ENCODE measurements at regions of chr15 and their contacts with region 1.

Region 1: DNA sequence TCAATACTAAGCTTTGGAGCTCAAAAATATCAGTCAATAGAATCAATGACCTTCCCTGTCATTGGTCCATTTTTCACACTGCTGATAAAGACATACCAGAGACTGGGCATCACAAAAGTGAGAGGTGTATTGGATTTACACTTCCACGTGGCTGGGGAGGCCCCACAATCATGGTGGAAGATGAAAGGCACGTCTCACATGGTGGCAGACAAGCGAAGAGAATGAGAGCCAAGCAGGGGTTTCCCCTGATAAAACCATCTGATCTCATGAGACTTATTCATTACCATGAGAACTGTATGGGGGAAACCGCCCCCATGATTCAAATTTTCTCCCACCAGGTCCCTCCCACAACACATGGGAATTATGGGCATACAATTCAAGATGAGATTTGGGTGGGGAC is 81.9 kb downstream of the ANXA2 start:
- DNase-seq: no peak
- ATAC-seq: no peak
- H3K4me3 ChIP-seq: no peak overlapping the region
- H3K27ac ChIP-seq: no peak overlapping the region
- H3K4me1 ChIP-seq: no peaks in the 10 kb centered on the region
- H3K27me3 ChIP-seq: no peaks in the 10 kb centered on the region

Region 2: DNA sequence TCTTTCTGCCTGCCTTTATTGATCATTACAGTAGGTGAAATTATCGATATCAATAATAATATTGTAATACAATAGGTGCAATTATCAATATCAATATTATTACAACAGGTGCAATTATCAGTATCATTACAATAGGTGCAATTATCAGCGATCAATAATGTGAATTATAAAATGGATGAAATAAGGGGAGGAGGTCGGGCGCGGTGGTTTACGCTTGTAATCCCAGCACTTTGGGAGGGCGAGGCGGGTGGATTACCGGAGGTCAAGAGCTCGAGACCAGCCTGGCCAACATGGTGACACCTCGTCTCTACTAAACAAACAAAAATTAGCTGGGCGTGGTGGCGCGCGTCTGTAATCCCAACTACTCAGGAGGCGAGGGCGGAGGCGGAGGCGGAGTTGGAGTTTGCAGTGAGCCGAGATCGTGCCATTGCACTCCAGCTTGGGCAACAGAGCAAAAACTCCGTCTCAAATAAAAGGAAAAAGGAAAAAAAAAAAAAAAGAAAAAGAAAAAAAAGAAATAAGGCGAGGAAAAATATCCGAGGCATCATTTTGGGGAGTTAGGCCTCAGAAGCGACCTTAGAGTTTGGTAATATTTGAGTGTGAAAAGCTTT is 626.1 kb before region 1 on chr15:
- intact Hi-C with region 1: loop called in 1 of 4 experiments (anchors 10 kb)
- DNase-seq: peak; percentile 88 to 96 (median 93)
- ATAC-seq: peak; percentile 72 to 76
- H3K4me3 ChIP-seq: peak overlapping the region; percentile 83
- H3K27ac ChIP-seq: peak overlapping the region; percentile 94
- H3K4me1 ChIP-seq: peaks cover 5% of the 10 kb centered on the region
- H3K27me3 ChIP-seq: no peaks in the 10 kb centered on the region

Region 3: DNA sequence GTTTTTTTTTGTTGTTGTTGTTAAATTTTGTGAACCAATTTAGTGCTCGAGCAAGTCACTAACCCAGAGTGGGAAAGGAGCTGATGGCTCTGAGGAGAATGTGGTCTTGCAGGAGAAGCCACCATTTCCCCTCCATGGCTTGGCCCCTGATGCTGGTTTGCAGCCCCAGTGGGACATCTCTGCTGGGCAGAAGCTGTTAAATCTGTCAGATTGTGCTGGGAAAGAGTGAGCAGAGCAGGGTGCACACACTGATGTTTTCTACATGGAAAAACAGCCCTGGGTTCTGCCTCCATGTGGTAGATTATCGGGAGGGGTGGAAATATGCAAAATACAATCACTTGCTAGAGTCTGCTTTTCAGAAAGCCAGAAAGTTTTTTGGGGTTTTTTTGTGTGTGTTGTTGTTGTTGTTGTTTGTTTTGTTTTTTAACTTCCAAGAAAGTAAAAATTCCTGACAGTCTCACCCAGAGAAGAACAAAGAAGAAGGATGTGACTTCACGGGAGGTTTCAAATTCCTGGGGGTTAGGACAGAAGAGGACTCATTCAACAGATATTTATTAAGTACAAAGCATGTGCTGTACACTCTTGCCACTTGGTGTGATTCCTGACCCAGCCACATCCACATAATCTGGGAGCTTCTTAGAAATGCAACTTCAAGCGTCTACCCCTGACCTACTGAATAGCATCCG is 178.0 kb before region 1 on chr15:
- intact Hi-C with region 1: no loop called
- DNase-seq: no peak
- ATAC-seq: no peak
- H3K4me3 ChIP-seq: no peak overlapping the region
- H3K27ac ChIP-seq: no peak overlapping the region
- H3K4me1 ChIP-seq: no peaks in the 10 kb centered on the region
- H3K27me3 ChIP-seq: no peaks in the 10 kb centered on the region

Region 4: GRCh38 chr15:60172143-60172542 is 143.7 kb before region 1 on chr15:
- intact Hi-C with region 1: no loop called
- DNase-seq: no peak
- ATAC-seq: no peak
- H3K4me3 ChIP-seq: no peak overlapping the region
- H3K27ac ChIP-seq: no peak overlapping the region
- H3K4me1 ChIP-seq: no peaks in the 10 kb centered on the region
- H3K27me3 ChIP-seq: no peaks in the 10 kb centered on the region